ENCODE measurements at regions of chr5 and their contacts with region 1.

Region 1: DNA sequence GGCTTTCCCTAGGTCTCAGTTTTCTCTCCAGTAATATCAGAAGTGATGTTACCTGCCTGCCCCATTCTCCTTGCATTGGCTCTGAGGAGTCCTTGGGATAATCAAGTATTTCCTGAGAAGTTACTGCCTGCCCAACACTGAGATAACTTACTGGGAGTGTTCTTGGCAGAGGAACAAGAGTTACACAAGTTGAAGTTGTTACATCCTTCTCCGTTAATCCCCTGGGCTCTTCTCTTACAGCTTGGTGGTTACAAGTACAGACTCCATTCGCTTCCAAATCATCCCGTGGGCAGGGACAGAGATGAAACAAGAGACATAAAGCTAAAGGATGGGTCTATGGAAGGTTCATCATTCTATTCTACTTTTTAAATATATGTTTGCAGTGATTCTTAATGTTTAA is 74.1 kb upstream of the SAP30L start:
- DNase-seq: peak in 1 of 2 donors; percentile 17
- ATAC-seq: peak; percentile 41 to 80 (median 60)
- H3K4me3 ChIP-seq: no peak overlapping the region
- H3K27ac ChIP-seq: peak overlapping the region in 6 of 10 donors; percentile 25 to 70 (median 56)
- H3K4me1 ChIP-seq: peaks cover 2 to 58% (median 47%) of the 10 kb centered on the region in 9 donors
- H3K27me3 ChIP-seq: no peaks in the 10 kb centered on the region
- CTCF ChIP-seq: no peak

Region 2: DNA sequence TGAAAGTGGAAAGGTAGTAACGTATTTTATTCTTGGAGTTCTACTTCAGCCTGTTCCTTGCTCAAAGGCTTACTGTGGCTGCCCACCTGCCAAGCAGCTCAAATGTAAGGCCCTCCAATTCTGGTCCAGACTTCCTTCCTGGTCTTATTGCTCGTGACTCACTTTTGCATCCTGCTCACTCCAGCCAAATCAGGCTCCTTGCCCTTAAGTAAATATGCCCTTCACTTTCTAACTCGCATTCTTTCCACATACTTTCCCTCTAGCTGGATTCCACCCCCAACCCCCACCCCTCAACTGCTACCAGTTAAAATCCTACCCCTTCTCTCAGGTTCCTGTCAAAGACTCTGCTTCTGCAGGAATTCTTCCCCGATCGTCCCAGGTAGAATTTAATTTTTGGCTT is 84.6 kb before region 1 on chr5:
- intact Hi-C with region 1: loop called in 1 of 10 experiments (anchors 10 kb)
- DNase-seq: peak in 1 of 2 donors; percentile 23
- ATAC-seq: peak in 7 of 8 donors; percentile 40 to 84 (median 68)
- H3K4me3 ChIP-seq: no peak overlapping the region
- H3K27ac ChIP-seq: peak overlapping the region in 6 of 10 donors; percentile 2 to 66 (median 40)
- H3K4me1 ChIP-seq: peaks cover 5 to 43% (median 36%) of the 10 kb centered on the region in 9 donors
- H3K27me3 ChIP-seq: no peaks in the 10 kb centered on the region
- CTCF ChIP-seq: no peak

Region 3: DNA sequence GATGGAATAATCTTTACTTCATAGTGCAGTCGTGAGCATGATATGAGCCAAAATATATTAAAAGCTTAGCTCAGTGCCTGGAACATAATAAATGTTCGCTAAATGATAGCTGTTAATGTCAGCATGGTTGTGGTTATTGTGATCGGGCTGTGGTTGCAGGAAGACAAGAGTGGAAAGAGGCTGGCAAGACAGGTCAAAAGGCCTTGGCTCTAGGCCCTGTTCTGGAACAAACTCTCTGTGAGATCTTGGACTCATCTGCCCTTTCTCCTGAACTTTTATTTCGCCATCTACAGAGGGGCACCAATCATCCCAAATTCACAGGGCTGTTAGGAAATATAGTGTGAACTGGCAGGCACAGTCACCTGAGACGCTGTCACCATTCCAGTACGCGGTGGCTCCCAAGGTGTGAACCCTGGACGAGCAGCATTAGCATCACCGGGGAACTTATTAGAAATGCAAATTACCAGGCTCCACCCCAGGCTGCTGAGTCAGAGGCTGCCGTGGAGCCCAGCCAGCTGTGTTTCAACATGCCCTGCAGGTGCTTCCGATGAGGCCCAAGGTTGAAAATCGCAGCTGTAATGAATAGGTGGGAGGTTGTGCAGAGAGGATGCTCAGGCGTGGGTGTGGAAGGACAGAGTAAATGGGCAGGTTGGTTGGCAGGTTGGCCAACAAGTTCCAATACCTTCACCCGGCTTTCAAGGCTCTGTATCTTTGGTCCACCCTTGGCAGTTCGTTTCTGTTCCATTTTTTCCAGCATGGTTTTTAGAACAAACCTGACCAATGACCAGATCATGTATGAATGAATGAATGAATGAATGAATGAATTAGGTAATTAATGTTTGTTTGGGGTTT is 23.9 kb after region 1 on chr5:
- intact Hi-C with region 1: loop called in 1 of 10 experiments (anchors 2 kb)
- DNase-seq: no peak
- ATAC-seq: peak in 1 of 8 donors; percentile 43
- H3K4me3 ChIP-seq: no peak overlapping the region
- H3K27ac ChIP-seq: no peak overlapping the region
- H3K4me1 ChIP-seq: peaks cover 0 to 8% (median 0%) of the 10 kb centered on the region in 9 donors
- H3K27me3 ChIP-seq: no peaks in the 10 kb centered on the region
- CTCF ChIP-seq: no peak

Region 4: DNA sequence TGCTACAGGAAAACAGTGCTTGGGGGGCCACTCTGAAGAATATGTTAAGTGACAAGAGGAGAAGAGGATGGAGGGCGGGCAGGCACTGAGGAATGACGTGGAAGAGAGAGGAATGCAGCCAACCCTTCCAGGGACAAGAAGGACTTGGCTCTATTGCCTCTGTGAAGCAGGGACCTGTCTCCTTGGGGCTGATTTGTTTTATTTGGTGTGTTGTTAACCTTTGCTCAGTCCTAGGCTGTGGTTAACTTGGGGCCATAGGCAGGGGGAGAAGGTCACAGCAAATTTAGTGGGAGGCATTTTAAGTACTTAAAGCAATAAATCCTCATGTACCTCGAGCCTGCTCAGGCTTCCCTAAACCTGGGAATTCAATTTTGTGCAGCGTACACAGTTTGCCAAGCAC is 681.8 kb after region 1 on chr5:
- intact Hi-C with region 1: no loop called
- DNase-seq: peak in 1 of 2 donors; percentile 19
- ATAC-seq: peak in 6 of 8 donors; percentile 69 to 91 (median 86)
- H3K4me3 ChIP-seq: no peak overlapping the region
- H3K27ac ChIP-seq: peak overlapping the region in 6 of 10 donors; percentile 44 to 72 (median 50)
- H3K4me1 ChIP-seq: peaks cover 0 to 17% (median 9%) of the 10 kb centered on the region in 9 donors
- H3K27me3 ChIP-seq: no peaks in the 10 kb centered on the region
- CTCF ChIP-seq: no peak